ENCODE measurements at regions of chr17 and their contacts with region 1.

Region 1: DNA sequence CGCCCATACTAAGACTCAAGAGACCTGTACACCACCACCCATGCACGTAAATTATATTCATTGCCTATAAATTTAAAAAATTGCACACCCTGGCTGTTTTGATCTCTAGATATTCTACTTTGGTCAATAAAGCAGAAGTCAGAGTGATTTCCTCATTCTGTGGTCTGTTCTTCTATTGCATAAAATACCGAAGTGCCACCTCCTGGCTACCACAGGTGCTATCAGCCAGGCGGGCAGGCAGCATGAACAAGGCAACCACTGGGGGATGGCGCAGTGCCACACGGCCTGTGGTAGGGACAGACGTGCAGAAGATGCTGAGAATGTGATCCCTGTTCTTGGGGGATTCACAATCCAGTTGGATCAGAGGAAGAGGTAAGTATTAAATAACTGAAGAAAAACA is 122.3 kb downstream of the CDK5R1 start:
- ATAC-seq: peak in 2 of 8 experiments; percentile 29 to 36
- H3K4me3 ChIP-seq: no peak overlapping the region
- H3K27ac ChIP-seq: no peak overlapping the region
- H3K4me1 ChIP-seq: no peaks in the 10 kb centered on the region

Region 2: GRCh38 chr17:32486111-32486700 is 122.9 kb before region 1 on chr17:
- in situ Hi-C with region 1: loop called in 1 of 9 experiments (anchors 25 kb)
- ATAC-seq: peak; percentile 74 to 88 (median 77)
- H3K4me3 ChIP-seq: peak overlapping the region; percentile 62 to 99 (median 75)
- H3K27ac ChIP-seq: peak overlapping the region; percentile 86 to 98
- H3K4me1 ChIP-seq: peaks cover 49 to 51% of the 10 kb centered on the region in 2 donors

Region 3: DNA sequence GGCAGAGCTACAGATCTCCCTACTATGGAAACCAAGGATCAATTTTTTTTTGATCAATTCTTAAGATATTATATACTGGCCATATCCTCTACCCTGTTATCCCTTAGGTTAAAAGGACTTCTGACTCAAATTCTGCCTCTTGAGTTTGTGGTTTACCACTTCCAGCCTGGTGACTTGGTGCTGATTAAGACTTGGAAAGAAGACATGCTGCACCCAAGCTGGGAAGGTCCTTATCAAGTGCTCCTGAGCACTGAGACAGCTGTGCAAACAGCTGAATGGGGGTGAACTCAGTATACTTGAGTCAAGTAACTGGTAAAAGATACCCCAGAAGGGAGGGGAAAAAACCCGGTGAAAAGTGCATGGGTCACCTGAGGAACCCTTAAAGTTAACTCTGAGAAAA is 362.1 kb after region 1 on chr17:
- in situ Hi-C with region 1: no loop called
- ATAC-seq: no peak
- H3K4me3 ChIP-seq: no peak overlapping the region
- H3K27ac ChIP-seq: no peak overlapping the region
- H3K4me1 ChIP-seq: no peaks in the 10 kb centered on the region